ENCODE measurements at regions of chr12 and their contacts with region 1.

Region 1: GRCh38 chr12:121483949-121484348 is 84.0 kb downstream of the RNF34 start:
- DNase-seq: no peak
- H3K4me3 ChIP-seq: no peak overlapping the region
- H3K27me3 ChIP-seq: no peaks in the 10 kb centered on the region
- CTCF ChIP-seq: no peak

Region 2: GRCh38 chr12:121467115-121467793 is 16.7 kb before region 1 on chr12:
- CTCF ChIA-PET with region 1: interaction called, 18 read pairs
- POLR2A ChIA-PET with region 1: no interaction called
- DNase-seq: peak; percentile 44
- H3K4me3 ChIP-seq: peak overlapping the region; percentile 49
- H3K27me3 ChIP-seq: no peaks in the 10 kb centered on the region
- CTCF ChIP-seq: no peak

Region 3: GRCh38 chr12:121494093-121494787 is 10.3 kb after region 1 on chr12:
- CTCF ChIA-PET with region 1: interaction called, 13 read pairs
- POLR2A ChIA-PET with region 1: no interaction called
- DNase-seq: no peak
- H3K4me3 ChIP-seq: no peak overlapping the region
- H3K27me3 ChIP-seq: no peaks in the 10 kb centered on the region
- CTCF ChIP-seq: peak; percentile 94

Region 4: GRCh38 chr12:121543786-121544185 is 59.8 kb after region 1 on chr12:
- CTCF ChIA-PET with region 1: no interaction called
- POLR2A ChIA-PET with region 1: no interaction called
- DNase-seq: no peak
- H3K4me3 ChIP-seq: no peak overlapping the region
- H3K27me3 ChIP-seq: no peaks in the 10 kb centered on the region
- CTCF ChIP-seq: no peak

Region 5: DNA sequence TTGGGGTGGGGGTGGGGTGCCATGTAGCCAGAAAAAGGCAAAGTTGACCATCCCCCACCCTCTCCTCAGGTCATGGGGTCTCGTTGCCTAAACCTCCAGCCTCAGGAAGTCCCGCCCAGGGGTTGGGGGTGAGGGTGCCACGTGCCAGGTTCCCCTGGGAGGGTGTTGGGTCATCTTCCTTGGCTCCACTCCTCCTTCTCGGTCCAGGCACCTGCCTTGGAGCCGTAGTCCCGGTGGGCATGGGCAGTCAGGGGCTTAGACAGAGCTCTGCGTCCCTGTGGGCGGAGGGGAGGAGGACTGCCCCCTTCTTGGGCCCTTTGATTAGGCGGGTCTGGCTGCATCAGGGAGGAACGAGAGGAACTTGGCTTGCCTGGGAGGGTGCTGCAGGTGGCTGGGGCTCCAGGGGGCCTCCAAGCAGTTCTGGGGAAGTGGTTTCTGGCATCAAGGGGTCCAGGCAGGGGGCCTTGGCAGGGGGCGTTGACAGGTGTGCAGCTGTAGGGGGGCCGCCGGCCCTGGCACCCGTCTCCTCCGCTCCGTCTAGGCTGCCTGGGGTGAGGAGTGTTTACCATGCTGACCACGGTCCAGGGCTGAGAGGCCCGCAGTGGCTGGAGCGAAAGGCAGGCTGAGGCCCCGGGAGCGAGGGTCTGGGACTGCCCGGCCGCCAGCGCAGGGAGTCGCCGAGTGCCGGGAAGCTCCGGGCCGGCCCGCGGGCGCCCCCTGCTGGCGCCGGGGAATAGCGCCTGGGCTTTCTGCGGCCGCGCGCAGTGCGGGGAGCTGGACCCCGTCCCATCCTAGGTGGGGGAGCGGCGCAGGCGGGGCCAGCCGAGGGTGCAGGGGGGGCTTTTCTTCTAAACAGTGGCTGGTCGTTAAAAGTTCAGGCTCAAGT is 327.7 kb after region 1 on chr12:
- CTCF ChIA-PET with region 1: no interaction called
- POLR2A ChIA-PET with region 1: no interaction called
- DNase-seq: no peak
- H3K4me3 ChIP-seq: peak overlapping the region; percentile 77
- H3K27me3 ChIP-seq: no peaks in the 10 kb centered on the region
- CTCF ChIP-seq: peak; percentile 54